CD8-positive, alpha-beta T cell (primary cell): ENCODE measurements at regions of chr12 and their contacts with region 1.

Region 1: DNA sequence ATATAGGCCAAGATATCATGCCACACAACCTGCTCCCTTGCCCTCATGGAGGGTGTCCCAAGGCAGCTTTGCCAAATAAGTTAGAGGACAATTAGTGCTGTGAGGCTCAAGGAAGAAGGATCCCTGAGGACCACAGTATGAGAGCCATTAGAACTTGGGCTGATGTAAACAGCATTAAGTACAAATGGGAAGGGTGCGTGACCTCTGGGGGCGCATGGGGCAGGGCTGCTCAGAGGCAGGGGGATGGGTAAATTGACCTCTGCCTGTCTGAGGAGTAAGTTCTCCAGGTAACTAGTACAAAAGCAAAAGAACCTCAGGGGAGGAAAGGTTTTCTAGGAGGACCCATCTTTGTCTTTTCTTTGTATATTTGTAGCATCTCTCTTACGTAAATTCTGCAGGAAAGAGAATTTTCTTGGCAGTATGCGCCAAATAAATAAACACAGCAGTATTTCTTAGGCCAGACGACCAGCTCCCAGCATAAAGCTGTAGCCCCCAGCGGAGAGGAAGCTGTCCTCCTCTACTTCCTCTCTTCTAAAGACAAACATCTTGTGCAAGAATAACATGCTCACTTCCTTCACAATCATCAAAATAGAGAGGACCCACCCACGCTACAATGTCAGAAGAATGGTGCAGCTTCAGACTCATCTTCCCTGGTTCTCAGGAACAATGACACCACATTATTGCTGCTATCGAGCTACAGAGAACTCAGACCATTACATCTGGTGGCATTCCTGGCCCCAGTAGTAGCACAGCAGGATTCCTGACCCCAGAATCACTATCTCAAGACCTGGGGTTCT is 16.4 kb upstream of the VWF start:
- DNase-seq: peak in 7 of 9 experiments; percentile 26 to 70 (median 34)
- ATAC-seq: peak; percentile 67
- H3K4me3 ChIP-seq: peak overlapping the region in 1 of 2 experiments; percentile 18
- H3K4me3 Mint-ChIP-seq: peak overlapping the region; percentile 64
- H3K27ac ChIP-seq: peak overlapping the region; percentile 54 to 61
- H3K27ac Mint-ChIP-seq: peak overlapping the region; percentile 97
- H3K4me1 ChIP-seq: peaks cover 60% of the 10 kb centered on the region
- H3K4me1 Mint-ChIP-seq: peaks cover 49% of the 10 kb centered on the region
- H3K27me3 ChIP-seq: no peaks in the 10 kb centered on the region
- H3K27me3 Mint-ChIP-seq: no peaks in the 10 kb centered on the region
- CTCF ChIP-seq: no peak

Region 2: GRCh38 chr12:5535541-5535940 is 605.3 kb before region 1 on chr12:
- CTCF ChIA-PET with region 1: no interaction called
- POLR2A ChIA-PET with region 1: no interaction called
- intact Hi-C with region 1: no loop called
- DNase-seq: no peak
- ATAC-seq: no peak
- H3K4me3 ChIP-seq: no peak overlapping the region
- H3K4me3 Mint-ChIP-seq: no peak overlapping the region
- H3K27ac ChIP-seq: no peak overlapping the region
- H3K27ac Mint-ChIP-seq: no peak overlapping the region
- H3K4me1 ChIP-seq: no peaks in the 10 kb centered on the region
- H3K4me1 Mint-ChIP-seq: no peaks in the 10 kb centered on the region
- H3K27me3 ChIP-seq: no peaks in the 10 kb centered on the region
- H3K27me3 Mint-ChIP-seq: peaks cover 25% of the 10 kb centered on the region
- CTCF ChIP-seq: no peak

Region 3: DNA sequence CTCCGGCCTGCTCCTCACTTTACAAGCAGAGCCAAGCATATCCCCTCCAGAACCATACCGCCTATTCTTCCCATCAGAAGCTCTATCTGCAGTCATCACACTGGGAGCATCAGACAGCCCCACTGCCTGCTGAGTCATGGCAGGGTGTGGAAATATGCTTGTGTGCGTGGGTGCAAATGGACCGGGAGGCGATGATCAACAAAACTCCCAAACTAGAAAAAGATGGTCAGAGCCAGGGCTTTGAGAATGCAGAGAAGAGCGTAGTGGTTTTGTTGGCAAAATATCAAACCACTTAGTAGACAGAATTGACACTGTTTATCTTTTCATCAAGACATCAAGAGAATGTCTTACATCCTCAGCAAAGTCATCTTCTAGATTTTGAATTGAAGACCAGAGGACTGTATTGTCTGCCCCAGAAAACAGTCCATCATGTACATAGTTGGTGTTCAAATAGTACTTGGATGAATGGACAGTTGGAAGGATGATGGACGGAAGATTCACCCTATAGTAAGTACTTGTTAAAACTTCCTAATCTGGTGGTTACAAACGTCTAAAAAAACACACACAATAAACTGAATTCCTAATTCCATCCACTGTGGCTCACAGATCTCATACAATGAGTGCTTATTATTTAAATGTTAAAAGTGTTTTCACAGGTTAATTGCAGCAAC is 71.3 kb before region 1 on chr12:
- CTCF ChIA-PET with region 1: no interaction called
- POLR2A ChIA-PET with region 1: no interaction called
- intact Hi-C with region 1: loop called in 1 of 2 experiments (anchors 5 kb)
- DNase-seq: peak in 3 of 9 experiments; percentile 14 to 55 (median 39)
- ATAC-seq: peak; percentile 59
- H3K4me3 ChIP-seq: no peak overlapping the region
- H3K4me3 Mint-ChIP-seq: peak overlapping the region; percentile 33
- H3K27ac ChIP-seq: no peak overlapping the region
- H3K27ac Mint-ChIP-seq: no peak overlapping the region
- H3K4me1 ChIP-seq: peaks cover 10% of the 10 kb centered on the region
- H3K4me1 Mint-ChIP-seq: peaks cover 22% of the 10 kb centered on the region
- H3K27me3 ChIP-seq: no peaks in the 10 kb centered on the region
- H3K27me3 Mint-ChIP-seq: no peaks in the 10 kb centered on the region
- CTCF ChIP-seq: no peak

Region 4: GRCh38 chr12:6167327-6168259 is 26.7 kb after region 1 on chr12:
- CTCF ChIA-PET with region 1: no interaction called
- POLR2A ChIA-PET with region 1: interaction called, 15 read pairs
- intact Hi-C with region 1: loop called in 1 of 2 experiments (anchors 2 kb)
- DNase-seq: peak in 8 of 9 experiments; percentile 12 to 58 (median 40)
- ATAC-seq: peak; percentile 60
- H3K4me3 ChIP-seq: no peak overlapping the region
- H3K4me3 Mint-ChIP-seq: peak overlapping the region; percentile 27
- H3K27ac ChIP-seq: peak overlapping the region in 1 of 2 experiments; percentile 31
- H3K27ac Mint-ChIP-seq: peak overlapping the region; percentile 16
- H3K4me1 ChIP-seq: peaks cover 28% of the 10 kb centered on the region
- H3K4me1 Mint-ChIP-seq: peaks cover 35% of the 10 kb centered on the region
- H3K27me3 ChIP-seq: no peaks in the 10 kb centered on the region
- H3K27me3 Mint-ChIP-seq: peaks cover 2% of the 10 kb centered on the region
- CTCF ChIP-seq: no peak